ENCODE measurements at regions of chr12 and their contacts with region 1.

Region 1: DNA sequence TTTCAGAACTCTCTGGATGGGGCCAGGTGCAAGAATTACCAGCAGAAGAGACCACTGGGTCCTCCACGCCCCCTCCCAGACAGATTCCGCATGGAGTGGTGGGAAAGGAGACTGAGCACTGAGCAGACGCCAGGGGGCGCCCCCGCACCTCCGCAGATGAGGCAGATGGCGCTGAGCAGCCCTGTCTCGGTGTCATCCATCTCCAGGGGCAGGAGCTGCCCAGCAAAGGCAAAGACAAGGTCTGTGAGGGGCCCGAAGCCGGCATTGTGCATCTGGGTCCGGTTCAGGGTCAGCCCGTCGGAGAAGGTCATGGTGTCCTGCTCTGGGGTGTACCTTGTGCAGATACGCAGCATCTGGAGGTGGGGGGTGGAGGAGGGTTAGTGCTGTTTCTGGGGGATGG is 6.3 kb upstream of the ITGB7 start:
- DNase-seq: peak; percentile 75 to 87 (median 80)
- H3K4me3 ChIP-seq: no peak overlapping the region
- H3K4me3 Mint-ChIP-seq: peak overlapping the region in 2 of 7 donors; percentile 12 to 40
- H3K27ac ChIP-seq: no peak overlapping the region
- H3K27ac Mint-ChIP-seq: peak overlapping the region; percentile 22 to 96 (median 90)
- H3K4me1 ChIP-seq: peaks cover 60% of the 10 kb centered on the region
- H3K4me1 Mint-ChIP-seq: peaks cover 62 to 81% (median 64%) of the 10 kb centered on the region in 3 donors
- H3K27me3 ChIP-seq: no peaks in the 10 kb centered on the region
- H3K27me3 Mint-ChIP-seq: no peaks in the 10 kb centered on the region

Region 2: GRCh38 chr12:53091756-53092155 is 121.6 kb before region 1 on chr12:
- CTCF ChIA-PET with region 1: no interaction called
- POLR2A ChIA-PET with region 1: no interaction called
- DNase-seq: no peak
- H3K4me3 ChIP-seq: no peak overlapping the region
- H3K4me3 Mint-ChIP-seq: no peak overlapping the region
- H3K27ac ChIP-seq: no peak overlapping the region
- H3K27ac Mint-ChIP-seq: peak overlapping the region in 1 of 8 donors; percentile 73
- H3K4me1 ChIP-seq: peaks cover under 1% of the 10 kb centered on the region
- H3K4me1 Mint-ChIP-seq: peaks cover 0 to 7% (median under 1%) of the 10 kb centered on the region in 3 donors
- H3K27me3 ChIP-seq: no peaks in the 10 kb centered on the region
- H3K27me3 Mint-ChIP-seq: peaks cover 3 to 6% of the 10 kb centered on the region in 2 donors

Region 3: GRCh38 chr12:53159195-53159839 is 54.0 kb before region 1 on chr12:
- CTCF ChIA-PET with region 1: interaction called, 36 read pairs
- POLR2A ChIA-PET with region 1: no interaction called
- DNase-seq: peak; percentile 76 to 91 (median 83)
- H3K4me3 ChIP-seq: no peak overlapping the region
- H3K4me3 Mint-ChIP-seq: no peak overlapping the region
- H3K27ac ChIP-seq: no peak overlapping the region
- H3K27ac Mint-ChIP-seq: peak overlapping the region in 6 of 8 donors; percentile 26 to 81 (median 42)
- H3K4me1 ChIP-seq: peaks cover 8% of the 10 kb centered on the region
- H3K4me1 Mint-ChIP-seq: peaks cover 6 to 8% (median 6%) of the 10 kb centered on the region in 3 donors
- H3K27me3 ChIP-seq: no peaks in the 10 kb centered on the region
- H3K27me3 Mint-ChIP-seq: no peaks in the 10 kb centered on the region

Region 4: GRCh38 chr12:53190108-53190729 is 23.1 kb before region 1 on chr12:
- CTCF ChIA-PET with region 1: interaction called, 11 read pairs
- POLR2A ChIA-PET with region 1: no interaction called
- DNase-seq: peak; percentile 33 to 67 (median 40)
- H3K4me3 ChIP-seq: no peak overlapping the region
- H3K4me3 Mint-ChIP-seq: no peak overlapping the region
- H3K27ac ChIP-seq: no peak overlapping the region
- H3K27ac Mint-ChIP-seq: peak overlapping the region; percentile 9 to 89 (median 70)
- H3K4me1 ChIP-seq: no peaks in the 10 kb centered on the region
- H3K4me1 Mint-ChIP-seq: peaks cover 12 to 35% (median 13%) of the 10 kb centered on the region in 3 donors
- H3K27me3 ChIP-seq: no peaks in the 10 kb centered on the region
- H3K27me3 Mint-ChIP-seq: no peaks in the 10 kb centered on the region

Region 5: GRCh38 chr12:53231826-53232645 is 18.7 kb after region 1 on chr12 and contains the start of gene RARG:
- CTCF ChIA-PET with region 1: interaction called, 98 read pairs
- POLR2A ChIA-PET with region 1: interaction called, 10 read pairs
- DNase-seq: peak; percentile 53 to 79 (median 68)
- H3K4me3 ChIP-seq: peak within 1 kb of the TSS; percentile 76
- H3K4me3 Mint-ChIP-seq: peak within 1 kb of the TSS; percentile 81 to 95 (median 91)
- H3K27ac ChIP-seq: peak within 1 kb of the TSS; percentile 12
- H3K27ac Mint-ChIP-seq: peak within 1 kb of the TSS; percentile 85 to 100 (median 96)
- H3K4me1 ChIP-seq: peaks cover 57% of the 10 kb centered on the region
- H3K4me1 Mint-ChIP-seq: peaks cover 56 to 85% (median 59%) of the 10 kb centered on the region in 3 donors
- H3K27me3 ChIP-seq: no peaks in the 10 kb centered on the region
- H3K27me3 Mint-ChIP-seq: peaks cover 0 to 1% of the 10 kb centered on the region in 2 donors
- total RNA-seq, gene RARG: 67.0 to 68.4 TPM

Region 6: DNA sequence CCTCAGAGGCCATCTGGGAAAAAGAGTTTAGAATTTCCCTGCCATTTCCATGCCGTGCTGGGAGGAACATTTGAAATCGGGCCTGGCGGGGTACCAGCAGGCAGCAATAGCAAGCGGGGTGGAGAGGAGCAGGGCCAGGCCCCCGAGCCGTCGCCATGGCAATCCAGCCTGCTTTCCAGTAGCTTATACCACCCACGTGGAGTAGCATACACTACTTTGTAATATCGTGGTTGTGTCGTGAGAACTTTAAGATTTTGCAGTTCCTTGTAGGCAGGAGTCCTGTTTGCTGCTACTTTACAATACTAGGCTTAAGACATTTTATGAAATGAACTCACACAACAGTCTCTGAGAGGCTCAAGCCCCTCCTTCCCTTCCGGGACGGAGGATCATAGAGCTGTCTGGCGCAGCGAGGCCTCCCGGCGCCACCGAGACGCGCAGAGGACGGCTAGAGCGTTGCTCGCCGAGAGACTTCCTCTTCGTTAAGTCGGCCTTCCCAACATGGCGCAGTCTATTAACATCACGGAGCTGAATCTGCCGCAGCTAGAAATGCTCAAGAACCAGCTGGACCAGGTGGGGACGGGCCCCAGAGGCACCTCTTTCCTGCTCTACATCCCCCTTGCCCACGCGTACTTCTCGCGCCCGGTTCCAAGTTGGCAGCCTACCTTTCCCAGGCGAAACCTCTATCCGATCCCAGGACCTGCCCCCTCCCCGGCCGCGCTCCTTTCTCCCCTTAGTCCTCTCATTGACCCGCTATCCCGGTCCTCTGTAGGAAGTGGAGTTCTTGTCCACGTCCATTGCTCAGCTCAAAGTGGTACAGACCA is 81.9 kb after region 1 on chr12 and contains the start of gene PFDN5:
- CTCF ChIA-PET with region 1: interaction called, 192 read pairs
- POLR2A ChIA-PET with region 1: interaction called, 4 read pairs
- DNase-seq: peak; percentile 72 to 93 (median 87)
- H3K4me3 ChIP-seq: peak within 1 kb of the TSS; percentile 90
- H3K4me3 Mint-ChIP-seq: peak within 1 kb of the TSS; percentile 97 to 100 (median 100)
- H3K27ac ChIP-seq: peak within 1 kb of the TSS; percentile 87
- H3K27ac Mint-ChIP-seq: peak within 1 kb of the TSS; percentile 93 to 100 (median 99)
- H3K4me1 ChIP-seq: peaks cover 41% of the 10 kb centered on the region
- H3K4me1 Mint-ChIP-seq: peaks cover 43 to 53% (median 47%) of the 10 kb centered on the region in 3 donors
- H3K27me3 ChIP-seq: no peaks in the 10 kb centered on the region
- H3K27me3 Mint-ChIP-seq: no peaks in the 10 kb centered on the region
- total RNA-seq, gene PFDN5: 380 to 385 TPM

Region 7: DNA sequence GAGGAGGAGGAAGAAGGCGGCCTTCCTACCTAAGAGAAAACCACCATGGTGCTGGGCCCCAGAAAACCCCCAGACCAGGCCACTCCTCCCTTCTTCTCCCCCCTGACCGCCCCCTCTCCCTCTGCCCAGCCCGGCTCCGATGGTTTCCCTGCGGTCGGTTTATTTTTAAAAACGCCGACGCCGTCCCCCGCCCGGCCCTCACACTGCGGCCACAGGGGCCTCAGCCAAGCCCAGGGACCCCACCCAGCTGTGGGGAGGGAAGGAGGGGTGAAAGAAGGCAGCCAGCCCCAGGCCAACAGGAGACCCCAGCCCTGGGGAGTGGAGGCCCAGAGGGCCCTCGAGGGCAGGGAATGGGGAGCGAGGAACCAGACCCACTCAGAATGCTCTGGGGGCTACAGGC is 119.4 kb after region 1 on chr12:
- CTCF ChIA-PET with region 1: no interaction called
- POLR2A ChIA-PET with region 1: no interaction called
- DNase-seq: no peak
- H3K4me3 ChIP-seq: no peak overlapping the region
- H3K4me3 Mint-ChIP-seq: no peak overlapping the region
- H3K27ac ChIP-seq: no peak overlapping the region
- H3K27ac Mint-ChIP-seq: no peak overlapping the region
- H3K4me1 ChIP-seq: no peaks in the 10 kb centered on the region
- H3K4me1 Mint-ChIP-seq: peaks cover 2% of the 10 kb centered on the region in 3 donors
- H3K27me3 ChIP-seq: peaks cover 15% of the 10 kb centered on the region
- H3K27me3 Mint-ChIP-seq: peaks cover 20 to 51% of the 10 kb centered on the region in 2 donors

Region 8: DNA sequence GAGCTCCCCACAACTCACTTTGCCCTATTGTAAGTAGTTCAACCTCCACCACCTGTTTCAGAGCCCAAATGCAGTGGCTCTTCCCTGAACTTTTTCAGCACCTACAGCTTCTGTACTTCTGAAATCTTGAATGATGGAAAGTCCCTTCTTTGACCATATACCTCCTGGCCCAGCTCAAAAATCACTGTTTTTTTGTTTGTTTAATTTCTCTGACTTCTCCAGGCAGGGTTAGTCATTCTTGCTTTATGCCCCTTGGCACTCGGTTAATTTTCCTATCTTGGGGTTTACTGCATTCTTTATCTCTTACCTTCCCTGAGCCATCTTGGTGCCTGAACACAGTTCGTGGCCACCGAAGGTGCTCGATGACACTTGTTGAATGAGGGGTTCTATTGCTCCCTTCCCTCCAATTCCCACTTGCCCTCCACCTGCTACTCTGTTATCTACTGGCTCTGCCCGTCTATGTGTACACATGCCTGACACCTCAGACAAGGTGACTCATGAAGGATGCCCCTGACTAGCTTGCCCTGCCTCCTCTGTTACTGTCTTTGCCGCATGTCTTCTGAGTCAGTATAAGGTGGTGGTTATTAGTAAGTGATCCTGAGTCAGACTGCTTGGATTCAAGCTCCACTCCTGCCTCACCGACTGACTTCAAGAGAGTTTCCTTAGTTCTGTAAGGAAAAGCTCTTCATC is 214.7 kb after region 1 on chr12:
- CTCF ChIA-PET with region 1: no interaction called
- POLR2A ChIA-PET with region 1: interaction called, 13 read pairs
- DNase-seq: no peak
- H3K4me3 ChIP-seq: no peak overlapping the region
- H3K4me3 Mint-ChIP-seq: no peak overlapping the region
- H3K27ac ChIP-seq: no peak overlapping the region
- H3K27ac Mint-ChIP-seq: peak overlapping the region in 2 of 8 donors; percentile 15 to 19
- H3K4me1 ChIP-seq: no peaks in the 10 kb centered on the region
- H3K4me1 Mint-ChIP-seq: no peaks in the 10 kb centered on the region
- H3K27me3 ChIP-seq: no peaks in the 10 kb centered on the region
- H3K27me3 Mint-ChIP-seq: no peaks in the 10 kb centered on the region